GM13976 (cell line): ENCODE measurements at regions of chr10 and their contacts with region 1.

Region 1: DNA sequence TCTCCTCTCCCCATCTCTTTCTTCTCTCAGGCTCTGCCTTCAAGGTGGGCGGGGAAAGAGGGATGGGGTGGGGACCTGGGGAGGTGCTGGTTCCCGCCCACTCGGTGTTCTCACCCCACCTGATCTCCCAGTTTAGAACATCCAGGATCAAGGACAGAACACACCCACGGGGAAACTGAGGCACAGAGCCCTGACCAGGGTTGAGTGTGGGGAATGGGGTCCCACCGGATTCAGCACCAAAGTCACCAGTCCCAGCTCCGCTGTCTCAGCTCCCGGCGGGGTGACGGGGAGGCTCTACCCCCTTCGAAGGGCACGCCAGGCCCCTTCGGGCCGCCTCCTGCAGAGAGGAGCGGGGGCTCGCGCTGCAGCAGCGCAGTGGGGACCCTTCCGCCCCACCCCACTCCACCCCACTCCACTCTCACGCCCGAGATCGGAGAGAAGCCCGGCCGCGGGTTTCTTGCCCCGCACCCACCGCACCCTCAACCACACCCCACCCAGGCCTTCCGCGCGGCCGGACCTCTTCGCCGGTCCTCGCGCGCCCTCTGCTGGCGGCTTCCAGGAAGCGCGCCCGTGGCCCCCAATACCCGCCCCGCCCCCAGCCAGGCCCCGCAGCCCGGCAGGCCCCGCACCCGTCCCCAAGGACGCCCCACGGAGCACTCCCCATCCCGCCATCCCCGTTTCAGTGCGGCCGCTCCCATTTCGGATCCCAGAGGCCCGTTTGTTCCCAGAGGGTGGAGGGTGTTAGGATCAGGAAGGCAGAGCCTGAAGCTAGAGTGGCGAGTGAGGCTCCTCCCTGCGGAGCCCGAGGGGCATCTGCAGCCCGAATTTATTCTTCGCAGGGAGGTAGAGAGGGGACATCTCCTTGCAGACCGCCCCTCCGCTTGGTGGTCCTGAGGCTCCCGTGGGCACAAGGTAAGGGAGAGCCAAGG is 18.0 kb downstream of the POLL start:
- DNase-seq: peak; percentile 94
- CTCF ChIP-seq: peak; percentile 89

Region 2: DNA sequence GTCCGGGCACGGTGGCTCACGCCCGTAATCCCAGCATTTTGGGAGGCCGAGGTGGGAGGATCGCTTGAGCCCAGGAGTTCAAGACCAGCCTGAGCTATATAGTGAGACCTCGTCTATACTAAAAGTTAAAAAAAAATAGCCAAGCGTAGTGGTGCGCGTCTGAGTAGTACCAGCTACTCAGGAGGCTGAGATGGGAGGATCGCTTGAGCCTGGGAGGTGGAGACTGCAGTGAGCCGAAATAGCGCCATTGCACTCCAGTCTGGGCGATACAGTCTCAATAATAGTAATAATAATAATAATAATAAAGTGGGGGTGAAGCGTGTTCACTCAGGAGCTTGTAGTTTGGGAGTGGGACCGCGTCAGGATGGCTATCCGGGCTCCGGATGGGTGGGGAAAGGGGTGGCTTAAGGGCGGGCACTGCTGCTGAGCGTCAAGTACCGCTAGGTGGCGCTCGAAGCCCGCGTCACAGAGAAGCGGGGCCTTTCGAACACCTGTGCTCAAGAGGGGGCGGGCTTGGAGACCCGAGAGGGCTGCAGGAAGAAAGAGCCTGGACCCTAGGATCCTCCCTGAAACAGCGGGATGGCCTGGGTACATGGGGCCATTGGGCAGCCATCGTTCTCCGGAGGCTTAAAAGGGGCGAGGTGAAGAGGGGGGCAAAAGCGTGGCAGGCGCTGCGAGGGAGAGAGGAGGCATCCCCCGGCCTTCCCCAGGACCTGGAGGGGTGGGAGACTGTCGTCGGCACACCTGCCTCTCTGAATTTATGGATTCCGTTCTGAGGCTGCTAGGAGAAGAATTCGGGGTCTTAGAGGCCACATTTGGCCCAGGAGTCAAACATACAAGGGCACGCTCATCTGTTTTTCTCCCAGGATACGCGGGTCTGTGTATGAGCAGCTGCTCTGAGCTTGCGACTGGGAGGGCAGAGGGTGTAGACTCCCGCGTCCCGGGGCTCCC is 355.4 kb before region 1 on chr10:
- in situ Hi-C with region 1: loop called (anchors 25 kb)
- DNase-seq: peak; percentile 84
- CTCF ChIP-seq: peak; percentile 82

Region 3: DNA sequence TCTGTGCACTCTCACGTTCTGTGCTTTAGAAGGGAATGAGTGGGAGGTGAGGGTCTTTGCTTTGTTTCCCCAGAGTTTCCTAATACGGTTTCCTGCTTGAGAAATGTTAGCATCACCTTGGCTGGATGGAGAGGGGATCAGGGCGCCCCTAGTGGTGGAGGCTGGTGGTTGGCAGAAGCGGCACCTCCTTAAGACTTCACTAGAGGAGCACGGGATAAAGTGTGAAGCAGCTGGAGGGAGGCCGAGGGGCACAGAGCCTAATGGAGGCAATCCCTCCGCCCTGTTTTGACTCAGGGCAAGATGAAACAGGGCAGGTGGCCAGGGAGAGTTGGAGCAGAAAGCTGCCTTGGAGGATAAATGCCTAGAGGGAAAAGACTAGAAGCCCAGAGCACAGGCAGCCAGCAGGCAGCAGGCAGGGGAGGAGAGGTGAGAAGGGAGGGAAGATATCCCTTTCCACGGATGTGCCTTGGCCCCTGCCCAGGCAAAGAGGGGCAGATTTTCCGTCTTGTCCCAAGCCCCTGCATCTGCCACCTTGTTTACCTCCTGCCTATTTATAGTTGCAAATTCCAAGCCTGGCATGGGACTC is 272.1 kb before region 1 on chr10:
- in situ Hi-C with region 1: loop called (anchors 25 kb)
- DNase-seq: peak; percentile 76
- CTCF ChIP-seq: peak; percentile 93

Region 4: GRCh38 chr10:101512738-101513137 is 57.4 kb before region 1 on chr10:
- in situ Hi-C with region 1: no loop called
- DNase-seq: no peak
- CTCF ChIP-seq: no peak